ENCODE measurements at regions of chr18 and their contacts with region 1.

Region 1: DNA sequence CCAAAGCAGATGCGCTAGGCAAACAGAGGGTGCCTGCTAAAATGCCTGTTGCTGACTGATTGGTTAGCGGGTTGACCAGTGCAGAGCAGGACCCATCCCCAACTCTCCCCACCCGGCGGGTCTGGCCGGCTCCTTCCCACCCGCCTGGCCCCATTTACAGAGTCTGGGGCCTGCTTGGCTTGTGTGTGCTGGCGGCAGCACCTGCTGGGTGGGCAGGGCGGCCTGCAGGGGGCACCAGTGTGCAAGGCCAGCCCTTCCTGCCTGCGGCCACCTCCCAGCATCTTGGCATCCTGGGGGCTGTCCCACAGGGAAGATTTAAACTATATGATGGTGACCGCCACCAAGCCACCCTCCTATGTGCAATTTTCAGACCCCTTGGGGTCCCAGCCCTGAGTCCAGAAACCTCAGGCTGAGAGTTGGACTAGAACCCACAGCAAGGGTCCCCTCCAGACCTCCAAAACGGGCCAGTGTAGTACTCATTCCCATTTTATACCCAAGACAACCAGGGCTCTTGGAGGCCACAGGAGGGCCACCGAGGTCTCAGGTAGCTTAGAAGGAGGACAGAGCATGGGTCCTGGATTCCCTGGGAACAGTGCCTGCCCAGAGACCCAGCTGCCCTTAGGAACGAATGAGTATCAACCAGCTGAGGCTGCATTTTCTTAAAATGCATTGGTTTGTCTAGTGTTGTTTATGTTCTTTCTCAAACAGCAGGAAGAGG is 173.6 kb downstream of the SMAD7 start:
- DNase-seq: no peak
- H3K4me3 ChIP-seq: no peak overlapping the region
- H3K27ac ChIP-seq: peak overlapping the region; percentile 22
- H3K4me1 ChIP-seq: peaks cover 52% of the 10 kb centered on the region
- H3K27me3 ChIP-seq: no peaks in the 10 kb centered on the region
- CTCF ChIP-seq: peak; percentile 47 to 71 (median 49)
- POLR2A ChIP-seq: no peak

Region 2: GRCh38 chr18:48680339-48681221 is 96.6 kb before region 1 on chr18:
- intact Hi-C with region 1: loop called (anchors 10 kb)
- DNase-seq: no peak
- H3K4me3 ChIP-seq: no peak overlapping the region
- H3K27ac ChIP-seq: no peak overlapping the region
- H3K4me1 ChIP-seq: peaks cover 13% of the 10 kb centered on the region
- H3K27me3 ChIP-seq: no peaks in the 10 kb centered on the region
- CTCF ChIP-seq: peak in 1 of 3 experiments; percentile 9
- POLR2A ChIP-seq: no peak

Region 3: DNA sequence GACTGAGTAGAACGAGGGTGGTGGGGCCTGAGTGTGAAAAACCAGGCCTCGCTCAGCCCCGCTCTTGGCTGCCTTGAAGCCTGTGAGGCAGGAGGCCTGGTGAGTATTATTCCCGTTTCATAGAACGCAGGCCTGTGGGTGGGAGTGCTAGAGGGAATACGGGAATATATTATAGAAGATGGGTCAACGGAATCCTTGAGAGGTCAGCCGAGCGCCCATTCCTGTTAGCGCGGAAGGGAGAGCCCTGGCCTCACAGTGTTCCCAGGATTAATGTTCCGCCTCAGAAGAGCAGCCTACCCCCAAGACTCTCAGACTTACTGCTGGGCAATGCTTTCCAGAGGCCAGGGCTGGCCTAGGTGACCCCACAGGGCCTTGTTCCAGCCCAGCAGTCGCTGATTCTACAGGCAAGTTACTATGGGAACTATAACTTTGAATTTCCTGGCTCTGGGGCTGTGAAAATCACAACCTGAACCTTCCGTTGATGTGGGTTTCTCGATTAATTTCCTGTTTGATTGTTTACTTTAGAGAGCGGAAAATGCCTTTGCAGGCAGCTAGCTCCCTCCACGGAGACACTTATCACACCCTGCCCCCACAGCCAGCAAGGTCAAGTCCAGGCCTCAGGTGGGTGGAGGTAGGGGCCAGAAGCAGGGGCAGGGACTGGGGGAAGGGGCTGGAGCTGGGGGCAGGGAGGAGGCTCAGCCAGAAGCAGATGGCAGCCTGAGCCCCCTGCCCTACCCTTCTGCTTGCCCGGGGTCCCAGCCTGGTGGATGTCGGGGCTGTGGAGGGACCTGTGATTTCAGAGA is 65.3 kb after region 1 on chr18:
- intact Hi-C with region 1: loop called (anchors 10 kb)
- DNase-seq: no peak
- H3K4me3 ChIP-seq: no peak overlapping the region
- H3K27ac ChIP-seq: peak overlapping the region; percentile 36
- H3K4me1 ChIP-seq: peaks cover 57% of the 10 kb centered on the region
- H3K27me3 ChIP-seq: no peaks in the 10 kb centered on the region
- CTCF ChIP-seq: no peak
- POLR2A ChIP-seq: no peak

Region 4: GRCh38 chr18:48951448-48952286 is 174.5 kb after region 1 on chr18:
- intact Hi-C with region 1: loop called (anchors 5 kb)
- DNase-seq: no peak
- H3K4me3 ChIP-seq: peak overlapping the region; percentile 72 to 89
- H3K27ac ChIP-seq: peak overlapping the region; percentile 98
- H3K4me1 ChIP-seq: peaks cover 53% of the 10 kb centered on the region
- H3K27me3 ChIP-seq: no peaks in the 10 kb centered on the region
- CTCF ChIP-seq: no peak
- POLR2A ChIP-seq: peak in 1 of 2 donors; percentile 84

Region 5: GRCh38 chr18:49041435-49042245 is 264.5 kb after region 1 on chr18:
- intact Hi-C with region 1: loop called (anchors 10 kb)
- DNase-seq: no peak
- H3K4me3 ChIP-seq: no peak overlapping the region
- H3K27ac ChIP-seq: no peak overlapping the region
- H3K4me1 ChIP-seq: no peaks in the 10 kb centered on the region
- H3K27me3 ChIP-seq: no peaks in the 10 kb centered on the region
- CTCF ChIP-seq: peak in 2 of 3 experiments; percentile 46 to 52
- POLR2A ChIP-seq: no peak

Region 6: DNA sequence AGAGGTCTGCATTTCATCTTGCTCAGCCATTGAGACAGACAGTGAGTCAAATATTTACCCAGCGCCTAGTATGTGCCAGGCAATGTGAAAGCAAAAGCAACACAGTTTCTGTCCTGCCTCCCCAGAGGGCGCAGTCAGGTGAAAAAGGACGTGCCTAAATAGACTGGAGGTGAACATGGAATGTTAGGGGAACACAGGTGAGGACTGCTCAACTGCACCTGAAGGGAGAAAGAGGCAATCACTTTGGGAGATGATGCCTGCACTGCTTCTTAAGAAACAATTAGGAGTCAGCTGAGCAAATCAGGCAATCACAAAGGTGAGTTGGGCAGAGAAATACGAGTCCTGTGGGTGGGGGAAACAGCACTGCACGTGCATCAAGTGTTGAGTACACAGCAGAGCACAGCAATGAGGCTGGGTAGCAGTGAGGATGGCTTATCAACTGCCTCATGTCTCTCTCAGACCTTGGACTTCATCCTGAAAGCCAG is 391.9 kb after region 1 on chr18:
- intact Hi-C with region 1: loop called (anchors 10 kb)
- DNase-seq: no peak
- H3K4me3 ChIP-seq: no peak overlapping the region
- H3K27ac ChIP-seq: no peak overlapping the region
- H3K4me1 ChIP-seq: peaks cover 15% of the 10 kb centered on the region
- H3K27me3 ChIP-seq: no peaks in the 10 kb centered on the region
- CTCF ChIP-seq: no peak
- POLR2A ChIP-seq: no peak